ENCODE measurements at regions of chr2 and their contacts with region 1.

Region 1: DNA sequence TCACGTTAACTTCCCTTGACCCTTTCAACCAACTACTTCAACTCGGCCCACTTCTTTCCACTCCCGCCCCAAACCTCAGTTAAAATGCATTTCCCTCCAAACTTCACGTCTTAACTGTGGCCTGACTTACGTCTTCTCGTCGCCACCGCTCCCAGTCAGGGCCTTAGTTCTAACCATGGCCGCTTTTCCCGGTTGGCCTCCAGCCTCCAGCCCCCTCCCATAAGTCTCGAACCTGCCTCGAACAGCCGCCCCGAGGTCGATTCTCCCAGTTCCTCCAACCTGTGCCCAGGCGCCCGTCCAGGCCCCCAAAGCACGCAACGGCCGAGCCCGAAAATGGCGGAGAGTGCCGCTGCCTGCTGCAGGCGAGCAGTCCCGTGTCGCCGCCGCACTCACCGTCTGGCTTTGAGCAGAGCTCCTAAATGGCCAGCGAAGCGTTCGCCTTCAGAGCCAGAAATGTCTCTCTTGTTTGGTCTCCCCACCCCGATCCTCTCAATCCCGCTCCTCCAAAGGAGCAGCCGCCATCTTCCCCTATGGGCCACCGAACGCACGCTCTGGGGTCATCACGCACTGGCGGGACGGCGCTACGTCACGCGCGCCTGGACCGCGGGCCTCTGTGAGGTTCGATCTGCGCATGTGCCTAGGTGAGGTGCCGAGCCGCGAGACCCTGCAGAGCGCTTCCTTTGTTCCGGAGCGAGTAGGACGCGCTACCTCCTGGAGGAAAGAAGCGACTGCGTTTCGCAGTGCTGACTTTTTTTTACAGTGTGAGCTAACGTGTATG is at the start of gene WDR33:
- DNase-seq: peak; percentile 96
- H3K4me3 ChIP-seq: peak within 1 kb of the TSS; percentile 73 to 85 (median 78)
- H3K27ac ChIP-seq: peak within 1 kb of the TSS; percentile 91 to 94 (median 94)
- H3K4me1 ChIP-seq: peaks cover 24 to 49% (median 47%) of the 10 kb centered on the region in 4 donors
- H3K27me3 ChIP-seq: no peaks in the 10 kb centered on the region
- CTCF ChIP-seq: peak; percentile 11 to 32 (median 21)
- EP300 ChIP-seq: no peak
- POLR2A ChIP-seq: peak; percentile 50
- total RNA-seq, gene WDR33: 25.8 to 35.3 (median 33.3) TPM

Region 2: GRCh38 chr2:127526149-127527000 is 284.4 kb before region 1 on chr2 and contains the start of gene IWS1:
- intact Hi-C with region 1: loop called (anchors 10 kb)
- DNase-seq: peak; percentile 99
- H3K4me3 ChIP-seq: peak within 1 kb of the TSS; percentile 81 to 97 (median 94)
- H3K27ac ChIP-seq: peak within 1 kb of the TSS; percentile 96 to 97 (median 96)
- H3K4me1 ChIP-seq: peaks cover 23 to 37% (median 28%) of the 10 kb centered on the region in 4 donors
- H3K27me3 ChIP-seq: no peaks in the 10 kb centered on the region
- CTCF ChIP-seq: peak in 2 of 3 experiments; percentile 34 to 48
- EP300 ChIP-seq: peak; percentile 73
- POLR2A ChIP-seq: peak; percentile 88
- total RNA-seq, gene IWS1: 32.6 to 38.1 (median 34.7) TPM

Region 3: GRCh38 chr2:127701193-127701650 is 109.6 kb before region 1 on chr2 and contains the start of gene SFT2D3:
- intact Hi-C with region 1: loop called (anchors 5 kb)
- DNase-seq: peak; percentile 98
- H3K4me3 ChIP-seq: peak within 1 kb of the TSS; percentile 79 to 95 (median 82)
- H3K27ac ChIP-seq: peak within 1 kb of the TSS; percentile 91 to 98 (median 97)
- H3K4me1 ChIP-seq: peaks cover 36 to 47% (median 42%) of the 10 kb centered on the region in 4 donors
- H3K27me3 ChIP-seq: no peaks in the 10 kb centered on the region
- CTCF ChIP-seq: peak in 1 of 3 experiments; percentile 9
- EP300 ChIP-seq: no peak
- POLR2A ChIP-seq: peak; percentile 57
- total RNA-seq, gene SFT2D3: 5.8 to 11.8 (median 9.4) TPM

Region 4: GRCh38 chr2:127759931-127760330 is 50.9 kb before region 1 on chr2:
- intact Hi-C with region 1: loop called (anchors 10 kb)
- DNase-seq: no peak
- H3K4me3 ChIP-seq: no peak overlapping the region
- H3K27ac ChIP-seq: no peak overlapping the region
- H3K4me1 ChIP-seq: no peaks in the 10 kb centered on the region
- H3K27me3 ChIP-seq: no peaks in the 10 kb centered on the region
- CTCF ChIP-seq: no peak
- EP300 ChIP-seq: no peak
- POLR2A ChIP-seq: no peak